AG04450 (cell line): ENCODE measurements at regions of chr3 and their contacts with region 1.

Region 1: DNA sequence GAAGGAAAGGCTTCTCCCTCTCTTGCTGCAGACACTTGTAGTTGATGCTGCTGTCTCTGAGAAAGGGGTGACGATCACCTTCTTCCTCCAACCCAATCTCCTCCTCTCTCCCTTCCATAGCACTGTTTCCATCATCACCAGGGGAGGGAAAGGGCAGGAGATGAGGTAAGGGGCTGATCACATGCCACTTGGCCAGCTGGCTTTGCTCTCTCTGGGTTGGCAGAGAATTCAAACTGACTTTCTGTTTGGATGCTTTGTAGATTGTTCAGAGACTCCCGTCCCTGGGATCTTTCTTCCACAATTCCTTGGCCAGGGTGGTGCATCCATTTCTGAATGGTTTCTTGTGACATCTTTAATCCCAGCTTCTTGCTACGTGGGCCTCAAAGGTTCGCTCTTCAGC is 43.2 kb upstream of the ZNF148 start:
- DNase-seq: no peak
- H3K4me3 ChIP-seq: no peak overlapping the region
- H3K27ac ChIP-seq: no peak overlapping the region
- H3K27me3 ChIP-seq: no peaks in the 10 kb centered on the region
- CTCF ChIP-seq: no peak

Region 2: DNA sequence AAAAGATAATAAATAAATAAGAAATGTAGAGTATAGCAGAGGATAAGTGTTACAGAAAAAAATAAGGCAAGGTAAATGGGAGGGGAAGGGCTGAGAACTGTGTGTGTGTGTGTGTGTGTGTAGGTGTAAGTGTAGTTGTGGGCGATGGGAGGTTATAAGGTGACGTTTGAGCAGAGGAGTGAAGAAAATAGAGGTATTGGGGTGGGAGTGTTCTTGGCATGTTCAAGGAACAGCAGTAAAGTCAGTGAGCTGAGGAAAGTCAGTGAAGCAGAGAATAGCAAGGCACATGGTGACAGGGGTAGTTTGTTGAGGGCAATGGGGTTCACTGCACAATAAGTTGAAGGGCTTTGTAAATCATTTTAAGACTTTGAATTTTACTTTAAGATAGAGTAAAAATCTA is 12.2 kb before region 1 on chr3:
- CTCF ChIA-PET with region 1: no interaction called
- POLR2A ChIA-PET with region 1: no interaction called
- DNase-seq: no peak
- H3K4me3 ChIP-seq: no peak overlapping the region
- H3K27ac ChIP-seq: no peak overlapping the region
- H3K27me3 ChIP-seq: no peaks in the 10 kb centered on the region
- CTCF ChIP-seq: no peak

Region 3: GRCh38 chr3:125437631-125438435 is 19.5 kb after region 1 on chr3:
- CTCF ChIA-PET with region 1: interaction called, 16 read pairs
- POLR2A ChIA-PET with region 1: no interaction called
- DNase-seq: no peak
- H3K4me3 ChIP-seq: no peak overlapping the region
- H3K27ac ChIP-seq: no peak overlapping the region
- H3K27me3 ChIP-seq: no peaks in the 10 kb centered on the region
- CTCF ChIP-seq: peak; percentile 98